ENCODE measurements at regions of chr11 and their contacts with region 1.

Region 1: GRCh38 chr11:75525596-75526541 is at the start of gene GDPD5:
- DNase-seq: peak; percentile 56 to 68
- ATAC-seq: peak; percentile 91
- H3K4me3 ChIP-seq: peak within 1 kb of the TSS; percentile 66 to 92 (median 73)
- H3K27ac ChIP-seq: peak within 1 kb of the TSS in 3 of 4 donors; percentile 46 to 68 (median 48)
- H3K4me1 ChIP-seq: peaks cover 20 to 26% of the 10 kb centered on the region in 2 donors
- H3K27me3 ChIP-seq: no peaks in the 10 kb centered on the region
- CTCF ChIP-seq: peak in 2 of 5 experiments; percentile 12 to 83
- POLR2A ChIP-seq: peak; percentile 61 to 66
- total RNA-seq, gene GDPD5: 5.6 to 12.6 (median 11.2) TPM

Region 2: DNA sequence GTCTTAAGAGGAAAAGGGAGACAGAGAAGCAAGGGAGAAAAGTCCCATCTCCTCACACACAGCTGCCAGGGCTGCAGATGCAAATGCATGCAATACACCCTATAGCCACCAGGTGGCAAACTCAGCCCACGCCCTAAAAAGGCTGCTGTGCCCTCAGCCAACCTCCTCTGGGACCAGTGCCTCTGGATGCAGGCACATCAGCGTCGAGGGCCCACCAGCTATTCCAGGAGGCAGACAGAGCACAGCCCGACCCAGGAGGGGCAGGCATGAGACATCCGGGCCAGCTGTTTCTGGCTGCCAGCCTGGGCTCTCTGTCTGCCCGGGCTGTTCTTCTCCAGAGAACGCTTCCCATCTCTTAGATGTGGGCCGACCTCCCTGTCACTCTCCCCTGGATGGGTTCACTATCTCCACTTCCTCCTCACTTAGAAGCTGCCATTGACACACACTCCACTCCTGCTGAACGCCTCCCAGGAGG is 245.6 kb before region 1 on chr11:
- in situ Hi-C with region 1: loop called in 3 of 4 experiments (anchors 10 to 25 kb)
- intact Hi-C with region 1: loop called (anchors 5 kb)
- DNase-seq: peak; percentile 32 to 57
- ATAC-seq: peak; percentile 69 to 71
- H3K4me3 ChIP-seq: no peak overlapping the region
- H3K27ac ChIP-seq: no peak overlapping the region
- H3K4me1 ChIP-seq: no peaks in the 10 kb centered on the region
- H3K27me3 ChIP-seq: no peaks in the 10 kb centered on the region
- CTCF ChIP-seq: peak; percentile 85 to 97 (median 95)
- POLR2A ChIP-seq: no peak

Region 3: DNA sequence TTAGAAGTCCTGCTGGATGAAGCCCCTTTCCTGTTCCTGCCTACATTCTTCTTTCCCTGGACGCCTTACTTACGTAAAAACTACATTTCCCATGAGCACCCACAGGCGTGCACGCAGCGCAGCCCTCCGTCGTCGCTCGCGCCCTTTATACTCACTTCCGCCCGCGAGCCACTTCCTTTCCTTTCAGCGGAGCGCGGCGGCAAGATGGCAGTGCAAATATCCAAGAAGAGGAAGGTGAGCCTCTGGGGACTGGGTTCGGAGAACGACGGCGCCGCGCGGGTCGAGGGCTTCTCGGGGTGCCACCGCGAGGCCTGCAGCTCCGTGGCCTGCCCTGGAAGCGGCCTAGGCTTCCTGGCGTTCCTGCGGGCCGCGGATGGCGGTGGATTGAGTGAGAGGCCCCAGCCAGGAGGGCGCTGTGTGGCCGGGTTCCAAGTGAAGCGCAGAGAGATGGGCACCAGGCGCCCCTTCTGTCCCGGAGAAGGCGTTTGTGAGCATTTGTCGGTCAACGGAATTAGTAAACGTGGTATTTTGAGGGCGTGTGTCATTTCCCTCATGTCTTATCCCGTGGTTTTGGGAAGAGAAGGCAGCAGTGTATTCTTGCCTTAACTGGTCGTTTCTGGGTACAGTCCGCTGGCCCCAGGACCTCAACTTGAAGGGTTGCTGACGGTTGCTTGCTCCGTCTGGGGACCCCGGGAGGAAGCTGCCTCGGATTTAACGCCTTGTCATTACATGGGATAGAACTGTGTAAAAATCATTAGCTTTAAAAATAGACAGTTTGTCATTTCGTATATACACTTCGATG is 126.3 kb before region 1 on chr11 and contains the start of gene RPS3:
- in situ Hi-C with region 1: no loop called
- intact Hi-C with region 1: loop called (anchors 2 kb)
- DNase-seq: peak; percentile 87 to 92
- ATAC-seq: peak; percentile 84 to 94
- H3K4me3 ChIP-seq: peak within 1 kb of the TSS; percentile 82 to 99 (median 87)
- H3K27ac ChIP-seq: peak within 1 kb of the TSS; percentile 90 to 98 (median 92)
- H3K4me1 ChIP-seq: peaks cover 32% of the 10 kb centered on the region in 2 donors
- H3K27me3 ChIP-seq: no peaks in the 10 kb centered on the region
- CTCF ChIP-seq: peak in 2 of 5 experiments; percentile 26 to 28
- POLR2A ChIP-seq: peak; percentile 92
- total RNA-seq, gene RPS3: 572 to 979 (median 746) TPM

Region 4: DNA sequence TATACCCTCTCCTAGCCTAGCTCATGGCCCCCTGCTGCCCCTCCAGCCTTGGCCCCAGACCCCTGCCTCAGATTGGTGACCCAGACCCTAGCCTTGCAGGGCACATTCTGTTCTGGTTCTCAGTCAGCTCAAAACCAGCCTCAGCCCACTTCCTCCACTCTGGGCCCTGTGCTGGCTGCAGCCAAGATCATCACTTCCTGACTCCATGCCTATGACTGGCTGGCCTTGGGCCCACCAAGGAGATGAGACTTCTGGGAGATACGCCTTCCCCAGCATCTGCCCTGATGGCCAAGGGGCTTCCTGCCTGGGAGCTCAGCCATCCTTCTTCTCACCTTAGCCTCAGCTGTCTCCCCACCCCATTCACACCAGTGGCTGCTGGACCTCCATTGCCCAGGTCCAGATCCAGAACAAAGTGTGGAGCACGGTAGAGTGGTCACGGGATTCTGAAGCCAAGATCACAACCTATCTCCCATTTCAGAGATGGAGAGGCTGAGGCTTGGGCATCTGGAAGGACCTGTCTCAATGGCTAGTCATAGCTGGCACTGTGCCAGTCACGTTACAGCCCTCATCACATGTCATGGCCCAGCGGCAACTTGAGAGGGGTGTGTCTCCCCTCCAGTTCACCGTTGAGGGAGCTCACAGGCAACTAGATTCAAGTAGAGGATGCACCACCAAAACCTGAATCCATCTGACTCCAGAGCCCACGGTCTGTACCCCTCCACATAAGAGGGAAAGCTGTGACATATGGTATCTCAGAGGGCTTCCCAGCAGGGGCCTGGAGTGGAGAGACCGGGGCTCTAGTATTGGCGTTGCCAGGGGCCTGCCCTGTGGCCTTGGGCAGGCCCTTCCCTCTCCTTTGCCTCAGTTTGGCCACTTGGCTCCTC is 49.9 kb before region 1 on chr11:
- in situ Hi-C with region 1: no loop called
- intact Hi-C with region 1: loop called (anchors 1 kb)
- DNase-seq: peak; percentile 36 to 84
- ATAC-seq: peak; percentile 39 to 58
- H3K4me3 ChIP-seq: peak overlapping the region in 1 of 4 donors; percentile 36
- H3K27ac ChIP-seq: peak overlapping the region; percentile 85 to 94 (median 90)
- H3K4me1 ChIP-seq: peaks cover 31 to 47% of the 10 kb centered on the region in 2 donors
- H3K27me3 ChIP-seq: no peaks in the 10 kb centered on the region
- CTCF ChIP-seq: no peak
- POLR2A ChIP-seq: no peak

Measured in gastrocnemius medialis (tissue), 4 donors.